Esophagus muscularis mucosa (tissue), 4 donors: ENCODE measurements at regions of chr16 and their contacts with region 1.

Region 1: DNA sequence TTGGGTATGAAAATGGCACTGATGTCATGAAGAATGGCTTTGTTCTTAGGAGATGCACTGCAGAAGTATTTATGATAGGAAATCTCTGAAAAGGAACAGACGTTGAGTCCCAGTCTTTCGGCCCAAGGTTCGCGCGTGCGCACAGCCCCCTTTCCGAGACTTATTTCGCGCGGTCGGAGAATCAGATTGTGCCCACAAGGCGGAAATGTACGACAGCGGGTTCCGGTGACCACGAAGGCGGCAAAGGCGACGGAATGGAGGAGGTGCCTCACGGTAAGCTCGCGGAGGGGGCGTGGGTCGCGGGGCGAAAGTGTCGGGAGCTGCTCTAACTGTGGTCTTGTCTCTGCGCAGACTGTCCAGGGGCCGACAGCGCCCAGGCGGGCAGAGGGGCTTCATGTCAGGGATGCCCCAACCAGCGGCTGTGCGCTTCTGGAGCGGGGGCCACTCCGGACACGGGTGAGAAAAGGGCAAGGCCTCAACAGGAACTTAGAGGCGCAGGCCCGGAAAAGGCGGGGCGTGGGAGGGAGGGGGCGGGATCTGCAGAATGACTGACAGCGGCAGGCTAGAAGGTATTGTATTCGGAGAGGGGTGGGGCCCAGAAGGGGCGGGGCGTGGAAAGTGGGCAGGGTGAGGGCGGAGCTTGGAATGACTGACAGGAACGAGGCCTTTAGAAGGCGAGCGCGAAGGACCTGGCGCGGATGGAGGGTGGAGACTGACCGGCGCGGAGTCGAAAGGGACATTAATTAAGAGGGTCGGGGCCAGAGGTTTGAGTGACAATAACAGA is at the start of gene NUBP1:
- DNase-seq: peak; percentile 100
- H3K4me3 ChIP-seq: peak within 1 kb of the TSS; percentile 56 to 77 (median 70)
- H3K27ac ChIP-seq: peak within 1 kb of the TSS; percentile 94 to 97 (median 96)
- H3K4me1 ChIP-seq: peaks cover 34 to 51% (median 38%) of the 10 kb centered on the region in 4 donors
- H3K27me3 ChIP-seq: no peaks in the 10 kb centered on the region
- CTCF ChIP-seq: no peak
- EP300 ChIP-seq: no peak
- POLR2A ChIP-seq: peak; percentile 35
- total RNA-seq, gene NUBP1: 17.4 to 34.7 (median 28.4) TPM

Region 2: GRCh38 chr16:10652730-10653590 is 90.8 kb before region 1 on chr16:
- intact Hi-C with region 1: no loop called
- DNase-seq: no peak
- H3K4me3 ChIP-seq: no peak overlapping the region
- H3K27ac ChIP-seq: no peak overlapping the region
- H3K4me1 ChIP-seq: no peaks in the 10 kb centered on the region
- H3K27me3 ChIP-seq: peaks cover 0 to 11% (median 0%) of the 10 kb centered on the region in 4 donors
- CTCF ChIP-seq: no peak
- EP300 ChIP-seq: no peak
- POLR2A ChIP-seq: no peak

Region 3: GRCh38 chr16:10828851-10829731 is 85.3 kb after region 1 on chr16:
- intact Hi-C with region 1: loop called (anchors 5 kb)
- DNase-seq: peak; percentile 95
- H3K4me3 ChIP-seq: peak overlapping the region; percentile 10 to 38 (median 21)
- H3K27ac ChIP-seq: peak overlapping the region; percentile 87 to 95 (median 88)
- H3K4me1 ChIP-seq: peaks cover 35 to 42% (median 36%) of the 10 kb centered on the region in 4 donors
- H3K27me3 ChIP-seq: no peaks in the 10 kb centered on the region
- CTCF ChIP-seq: no peak
- EP300 ChIP-seq: peak; percentile 40
- POLR2A ChIP-seq: no peak